Natural killer cell (primary cell): ENCODE measurements at regions of chr19 and their contacts with region 1.

Region 1: GRCh38 chr19:21505459-21506451 is at the start of gene ZNF429:
- DNase-seq: peak; percentile 86 to 96
- ATAC-seq: peak; percentile 98 to 100 (median 99)
- H3K4me3 ChIP-seq: peak within 1 kb of the TSS; percentile 86
- H3K4me3 Mint-ChIP-seq: peak within 1 kb of the TSS; percentile 98
- H3K27ac ChIP-seq: peak within 1 kb of the TSS; percentile 92
- H3K27ac Mint-ChIP-seq: peak within 1 kb of the TSS; percentile 98 to 99
- H3K4me1 ChIP-seq: peaks cover 22% of the 10 kb centered on the region
- H3K4me1 Mint-ChIP-seq: peaks cover 28 to 37% of the 10 kb centered on the region in 2 donors
- H3K27me3 ChIP-seq: no peaks in the 10 kb centered on the region
- H3K27me3 Mint-ChIP-seq: no peaks in the 10 kb centered on the region
- CTCF ChIP-seq: no peak
- total RNA-seq, gene ZNF429: 15.7 to 21.0 (median 18.7) TPM

Region 2: GRCh38 chr19:21141787-21142464 is 363.8 kb before region 1 on chr19 and contains the start of gene ZNF431:
- intact Hi-C with region 1: loop called (anchors 10 kb)
- DNase-seq: peak; percentile 87 to 95
- ATAC-seq: peak; percentile 97 to 99 (median 99)
- H3K4me3 ChIP-seq: peak within 1 kb of the TSS; percentile 62
- H3K4me3 Mint-ChIP-seq: peak within 1 kb of the TSS; percentile 95
- H3K27ac ChIP-seq: peak within 1 kb of the TSS; percentile 79
- H3K27ac Mint-ChIP-seq: peak within 1 kb of the TSS; percentile 95 to 98
- H3K4me1 ChIP-seq: peaks cover 9% of the 10 kb centered on the region
- H3K4me1 Mint-ChIP-seq: peaks cover 33 to 44% of the 10 kb centered on the region in 2 donors
- H3K27me3 ChIP-seq: no peaks in the 10 kb centered on the region
- H3K27me3 Mint-ChIP-seq: no peaks in the 10 kb centered on the region
- CTCF ChIP-seq: no peak
- total RNA-seq, gene ZNF431: 30.1 to 39.7 (median 30.4) TPM

Region 3: GRCh38 chr19:21328885-21329605 is 176.7 kb before region 1 on chr19 and contains the start of gene ZNF708:
- intact Hi-C with region 1: loop called (anchors 10 kb)
- DNase-seq: peak; percentile 73 to 86
- ATAC-seq: peak; percentile 97 to 100 (median 98)
- H3K4me3 ChIP-seq: peak within 1 kb of the TSS; percentile 96
- H3K4me3 Mint-ChIP-seq: peak within 1 kb of the TSS; percentile 97
- H3K27ac ChIP-seq: peak within 1 kb of the TSS; percentile 97
- H3K27ac Mint-ChIP-seq: peak within 1 kb of the TSS; percentile 98
- H3K4me1 ChIP-seq: peaks cover 15% of the 10 kb centered on the region
- H3K4me1 Mint-ChIP-seq: peaks cover 34 to 38% of the 10 kb centered on the region in 2 donors
- H3K27me3 ChIP-seq: no peaks in the 10 kb centered on the region
- H3K27me3 Mint-ChIP-seq: no peaks in the 10 kb centered on the region
- CTCF ChIP-seq: no peak
- total RNA-seq, gene ZNF708: 21.2 to 24.4 (median 24.4) TPM

Region 4: GRCh38 chr19:21358768-21359451 is 146.8 kb before region 1 on chr19 and contains the start of gene ZNF738:
- intact Hi-C with region 1: loop called (anchors 1 kb)
- DNase-seq: peak; percentile 85 to 91
- ATAC-seq: peak; percentile 97 to 98 (median 98)
- H3K4me3 ChIP-seq: peak within 1 kb of the TSS; percentile 85
- H3K4me3 Mint-ChIP-seq: peak within 1 kb of the TSS; percentile 99
- H3K27ac ChIP-seq: peak within 1 kb of the TSS; percentile 83
- H3K27ac Mint-ChIP-seq: peak within 1 kb of the TSS; percentile 94 to 96
- H3K4me1 ChIP-seq: peaks cover 7% of the 10 kb centered on the region
- H3K4me1 Mint-ChIP-seq: peaks cover 18% of the 10 kb centered on the region in 2 donors
- H3K27me3 ChIP-seq: no peaks in the 10 kb centered on the region
- H3K27me3 Mint-ChIP-seq: no peaks in the 10 kb centered on the region
- CTCF ChIP-seq: no peak
- total RNA-seq, gene ZNF738: 11.4 to 22.9 (median 14.7) TPM

Region 5: GRCh38 chr19:21767065-21767800 is 261.5 kb after region 1 on chr19 and contains the start of gene ZNF100:
- intact Hi-C with region 1: loop called (anchors 10 kb)
- DNase-seq: peak; percentile 77 to 93
- ATAC-seq: peak; percentile 96 to 97 (median 97)
- H3K4me3 ChIP-seq: peak within 1 kb of the TSS; percentile 87
- H3K4me3 Mint-ChIP-seq: peak within 1 kb of the TSS; percentile 96
- H3K27ac ChIP-seq: peak within 1 kb of the TSS; percentile 92
- H3K27ac Mint-ChIP-seq: peak within 1 kb of the TSS; percentile 90 to 94
- H3K4me1 ChIP-seq: peaks cover 6% of the 10 kb centered on the region
- H3K4me1 Mint-ChIP-seq: peaks cover 28 to 30% of the 10 kb centered on the region in 2 donors
- H3K27me3 ChIP-seq: no peaks in the 10 kb centered on the region
- H3K27me3 Mint-ChIP-seq: no peaks in the 10 kb centered on the region
- CTCF ChIP-seq: no peak
- total RNA-seq, gene ZNF100: 7.9 to 16.9 (median 9.5) TPM

Region 6: GRCh38 chr19:21835810-21836444 is 330.2 kb after region 1 on chr19 and contains the start of gene ZNF43:
- intact Hi-C with region 1: loop called (anchors 5 kb)
- DNase-seq: peak; percentile 90 to 95
- ATAC-seq: peak; percentile 96 to 99 (median 97)
- H3K4me3 ChIP-seq: peak within 1 kb of the TSS; percentile 73
- H3K4me3 Mint-ChIP-seq: peak within 1 kb of the TSS; percentile 98
- H3K27ac ChIP-seq: peak within 1 kb of the TSS; percentile 83
- H3K27ac Mint-ChIP-seq: peak within 1 kb of the TSS; percentile 98 to 100
- H3K4me1 ChIP-seq: peaks cover 15% of the 10 kb centered on the region
- H3K4me1 Mint-ChIP-seq: peaks cover 20 to 22% of the 10 kb centered on the region in 2 donors
- H3K27me3 ChIP-seq: no peaks in the 10 kb centered on the region
- H3K27me3 Mint-ChIP-seq: no peaks in the 10 kb centered on the region
- CTCF ChIP-seq: no peak
- total RNA-seq, gene ZNF43: 21.6 to 36.8 (median 31.0) TPM